Sigmoid colon (tissue), 7 donors: ENCODE measurements at regions of chr12 and their contacts with region 1.

Region 1: GRCh38 chr12:47758834-47759690 is at the start of gene RAPGEF3:
- DNase-seq: peak; percentile 93
- H3K4me3 ChIP-seq: peak within 1 kb of the TSS; percentile 60 to 73 (median 64)
- H3K27ac ChIP-seq: peak within 1 kb of the TSS; percentile 75 to 80 (median 78)
- H3K4me1 ChIP-seq: peaks cover 0 to 24% (median 19%) of the 10 kb centered on the region in 4 donors
- H3K27me3 ChIP-seq: no peaks in the 10 kb centered on the region
- CTCF ChIP-seq: peak; percentile 36 to 56 (median 50)
- EP300 ChIP-seq: peak in 1 of 4 donors; percentile 9
- POLR2A ChIP-seq: no peak
- total RNA-seq, gene RAPGEF3: 13.8 to 36.8 (median 14.6) TPM

Region 2: DNA sequence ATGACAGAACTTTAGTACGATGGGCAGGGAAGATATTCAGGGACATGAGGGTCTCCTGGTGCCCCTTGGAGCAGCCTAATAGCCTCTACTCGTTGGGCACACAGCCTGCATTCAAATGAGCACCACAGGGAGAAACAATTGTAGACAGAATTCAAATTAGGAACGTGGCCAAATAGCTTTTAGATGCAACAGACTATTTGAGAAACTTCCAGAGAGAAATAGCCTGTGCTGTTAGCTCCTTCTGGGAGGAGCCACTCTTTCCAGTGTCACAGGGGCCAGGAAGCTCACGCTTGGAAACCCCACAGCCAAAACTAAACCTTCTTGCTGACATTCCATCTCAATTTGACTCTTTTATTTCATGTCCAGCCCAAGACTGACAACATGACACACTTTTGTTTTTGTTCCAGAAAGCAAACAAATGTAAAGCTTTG is 167.7 kb before region 1 on chr12:
- intact Hi-C with region 1: no loop called
- DNase-seq: no peak
- H3K4me3 ChIP-seq: no peak overlapping the region
- H3K27ac ChIP-seq: peak overlapping the region; percentile 27 to 83 (median 76)
- H3K4me1 ChIP-seq: peaks cover 0 to 56% (median 54%) of the 10 kb centered on the region in 4 donors
- H3K27me3 ChIP-seq: no peaks in the 10 kb centered on the region
- CTCF ChIP-seq: no peak
- EP300 ChIP-seq: no peak
- POLR2A ChIP-seq: no peak

Region 3: DNA sequence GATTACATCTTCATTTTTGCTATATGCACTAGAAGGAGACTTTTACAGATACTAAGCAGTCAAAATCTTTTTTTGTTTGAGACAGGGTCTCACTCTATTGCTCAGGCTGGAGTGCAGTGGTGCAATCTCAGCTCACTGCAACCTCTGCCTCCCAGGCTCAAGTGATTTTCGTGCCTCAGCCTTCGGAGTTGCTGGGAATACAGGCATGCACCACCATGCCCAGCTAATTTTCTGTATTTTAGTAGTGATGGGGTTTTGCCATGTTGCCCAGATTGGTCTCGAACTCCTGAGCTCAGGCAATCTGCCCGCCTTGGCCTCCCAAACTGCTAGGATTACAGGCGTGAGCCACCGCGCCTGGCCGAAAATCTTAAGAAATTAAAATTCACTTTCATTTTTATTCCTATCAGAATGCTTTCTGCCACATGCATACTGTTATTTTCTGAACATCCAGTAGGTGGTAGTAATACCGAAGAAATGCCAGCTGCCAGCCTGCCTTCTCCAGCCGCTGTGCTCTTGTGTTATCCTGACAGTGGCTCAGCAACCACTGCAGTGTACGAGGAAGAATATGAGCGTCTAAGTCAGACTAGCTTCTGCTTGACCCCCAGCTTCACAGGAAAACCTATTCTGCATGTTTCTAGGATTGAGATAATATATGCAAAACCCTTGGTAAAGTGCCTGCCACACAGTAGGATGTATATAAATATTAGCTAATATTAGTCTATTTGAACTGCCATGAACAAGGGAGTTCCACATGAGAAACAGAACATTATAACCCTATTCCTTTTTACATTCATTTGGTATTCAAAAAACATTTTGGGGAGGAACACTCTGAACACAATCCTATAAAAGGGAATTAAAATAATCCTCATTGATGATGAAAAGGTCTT is 107.5 kb before region 1 on chr12:
- intact Hi-C with region 1: no loop called
- DNase-seq: peak; percentile 84
- H3K4me3 ChIP-seq: no peak overlapping the region
- H3K27ac ChIP-seq: peak overlapping the region in 3 of 4 donors; percentile 55 to 72 (median 71)
- H3K4me1 ChIP-seq: peaks cover 0 to 44% (median 31%) of the 10 kb centered on the region in 4 donors
- H3K27me3 ChIP-seq: no peaks in the 10 kb centered on the region
- CTCF ChIP-seq: peak; percentile 57 to 81 (median 71)
- EP300 ChIP-seq: no peak
- POLR2A ChIP-seq: no peak

Region 4: GRCh38 chr12:47736877-47737676 is 22.0 kb before region 1 on chr12:
- intact Hi-C with region 1: loop called (anchors 1 kb)
- DNase-seq: peak; percentile 96
- H3K4me3 ChIP-seq: peak overlapping the region in 2 of 4 donors; percentile 2
- H3K27ac ChIP-seq: peak overlapping the region; percentile 78 to 83 (median 82)
- H3K4me1 ChIP-seq: peaks cover 0 to 53% (median 44%) of the 10 kb centered on the region in 4 donors
- H3K27me3 ChIP-seq: no peaks in the 10 kb centered on the region
- CTCF ChIP-seq: peak in 1 of 4 experiments; percentile 12
- EP300 ChIP-seq: peak in 1 of 4 donors; percentile 14
- POLR2A ChIP-seq: no peak